Right lobe of liver (tissue), 6 donors: ENCODE measurements at regions of chr5 and their contacts with region 1.

Region 1: GRCh38 chr5:137660349-137660817 is 75.5 kb downstream of the KLHL3 start:
- DNase-seq: peak; percentile 62 to 76 (median 67)
- ATAC-seq: peak; percentile 98 to 100 (median 98)
- H3K4me3 ChIP-seq: no peak overlapping the region
- H3K27ac ChIP-seq: no peak overlapping the region
- H3K4me1 ChIP-seq: no peaks in the 10 kb centered on the region
- H3K27me3 ChIP-seq: no peaks in the 10 kb centered on the region
- CTCF ChIP-seq: peak; percentile 81 to 86 (median 82)
- POLR2A ChIP-seq: no peak

Region 2: GRCh38 chr5:137498736-137499505 is 161.5 kb before region 1 on chr5 and contains the start of gene SPOCK1:
- intact Hi-C with region 1: no loop called
- DNase-seq: peak; percentile 70 to 76 (median 71)
- ATAC-seq: peak; percentile 96 to 100 (median 98)
- H3K4me3 ChIP-seq: no peak within 1 kb of the TSS
- H3K27ac ChIP-seq: no peak within 1 kb of the TSS
- H3K4me1 ChIP-seq: peaks cover 0 to 9% (median 0%) of the 10 kb centered on the region in 4 donors
- H3K27me3 ChIP-seq: peaks cover 0 to 7% of the 10 kb centered on the region in 2 donors
- CTCF ChIP-seq: peak; percentile 77 to 85 (median 80)
- POLR2A ChIP-seq: no peak
- total RNA-seq, gene SPOCK1: 0.06 to 0.86 (median 0.15) TPM in 5 of 6 experiments, not detected in the other

Region 3: GRCh38 chr5:137747848-137748247 is 87.5 kb after region 1 on chr5:
- intact Hi-C with region 1: loop called in 1 of 2 experiments (anchors 5 kb)
- DNase-seq: no peak
- ATAC-seq: no peak
- H3K4me3 ChIP-seq: no peak overlapping the region
- H3K27ac ChIP-seq: no peak overlapping the region
- H3K4me1 ChIP-seq: peaks cover 0 to 22% (median 5%) of the 10 kb centered on the region in 4 donors
- H3K27me3 ChIP-seq: no peaks in the 10 kb centered on the region
- CTCF ChIP-seq: no peak
- POLR2A ChIP-seq: no peak